WTC11 (cell line): ENCODE measurements at regions of chr10 and their contacts with region 1.

Region 1: GRCh38 chr10:92848441-92849233 is at the start of gene EXOC6:
- DNase-seq: peak; percentile 78
- ATAC-seq: peak; percentile 79
- H3K4me3 Mint-ChIP-seq: peak within 1 kb of the TSS; percentile 87
- H3K27ac Mint-ChIP-seq: no peak within 1 kb of the TSS
- H3K4me1 Mint-ChIP-seq: peaks cover 12% of the 10 kb centered on the region
- H3K27me3 Mint-ChIP-seq: peaks cover 58% of the 10 kb centered on the region
- CTCF ChIP-seq: no peak
- total RNA-seq, gene EXOC6: 4.4 to 5.0 TPM (median 4.5 TPM) in 3 replicates

Region 2: DNA sequence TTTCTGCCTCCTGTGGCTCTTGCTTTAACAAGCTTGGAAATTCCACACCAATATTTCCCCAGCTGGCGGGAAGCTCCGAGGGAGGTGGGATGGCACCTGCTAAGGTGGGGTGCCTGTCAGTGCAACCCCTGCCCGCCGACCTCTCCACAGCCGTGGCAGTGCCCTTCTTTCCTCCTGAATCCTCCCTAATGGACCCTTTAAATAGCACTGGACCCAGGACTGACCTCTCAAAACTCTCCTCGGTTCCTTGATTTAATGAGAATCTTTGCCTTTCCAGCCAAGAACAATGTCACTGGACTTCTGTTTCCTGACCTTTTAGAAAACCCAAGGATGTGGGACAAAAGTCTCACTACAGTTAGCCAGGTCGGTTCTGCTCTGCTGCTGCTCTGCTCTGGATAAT is 63.5 kb before region 1 on chr10:
- CTCF ChIA-PET with region 1: no interaction called
- POLR2A ChIA-PET with region 1: no interaction called
- DNase-seq: no peak
- ATAC-seq: no peak
- H3K4me3 Mint-ChIP-seq: no peak overlapping the region
- H3K27ac Mint-ChIP-seq: no peak overlapping the region
- H3K4me1 Mint-ChIP-seq: peaks cover 23% of the 10 kb centered on the region
- H3K27me3 Mint-ChIP-seq: peaks cover 3% of the 10 kb centered on the region; the same call in 1 of the 2 replicates
- CTCF ChIP-seq: no peak

Region 3: DNA sequence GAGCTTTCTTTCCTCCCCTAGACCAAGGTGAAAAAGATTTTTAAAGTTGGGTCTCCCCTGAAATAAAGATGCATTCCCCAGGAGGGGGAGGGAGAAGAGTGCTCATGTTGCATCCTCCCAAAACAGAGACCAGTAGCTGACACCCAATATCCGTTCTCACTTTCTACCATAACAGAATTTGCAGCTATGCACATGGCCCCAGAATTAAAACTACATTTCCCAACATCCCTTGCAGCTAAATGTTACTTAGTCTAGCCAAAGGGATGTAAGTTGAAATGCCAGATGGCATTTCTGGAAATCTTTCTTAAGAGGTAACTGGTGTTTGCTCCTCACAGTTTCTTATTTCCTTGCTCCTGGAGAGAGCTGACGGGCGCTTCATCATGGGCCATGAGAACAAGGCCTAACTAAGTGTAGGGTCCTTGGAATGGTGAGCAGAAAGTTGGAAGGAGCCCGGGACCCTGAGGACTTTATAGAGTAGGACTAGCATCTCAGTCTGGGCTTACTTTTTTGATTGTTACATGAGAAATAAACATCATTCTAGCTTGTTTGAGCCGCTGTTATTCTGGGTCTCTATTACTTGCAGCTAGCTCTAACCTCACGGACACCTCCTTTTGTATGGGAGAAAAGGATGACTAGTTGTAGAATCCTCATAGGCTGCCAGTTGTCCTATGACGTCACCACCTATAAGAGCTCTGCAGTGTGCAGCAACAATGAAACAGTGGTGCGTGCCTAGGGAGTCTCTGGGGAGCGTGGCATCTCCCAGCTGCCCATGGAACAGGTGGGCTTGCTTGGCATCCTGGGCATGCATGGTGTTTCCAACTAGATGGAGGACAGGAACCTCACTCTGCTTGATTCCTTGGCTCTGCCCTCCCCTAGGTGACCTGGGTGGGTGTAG is 46.4 kb before region 1 on chr10:
- CTCF ChIA-PET with region 1: interaction called, 12 read pairs
- POLR2A ChIA-PET with region 1: interaction called, 3 read pairs
- DNase-seq: no peak
- ATAC-seq: no peak
- H3K4me3 Mint-ChIP-seq: no peak overlapping the region
- H3K27ac Mint-ChIP-seq: no peak overlapping the region
- H3K4me1 Mint-ChIP-seq: peaks cover 16% of the 10 kb centered on the region
- H3K27me3 Mint-ChIP-seq: no peaks in the 10 kb centered on the region
- CTCF ChIP-seq: no peak

Region 4: DNA sequence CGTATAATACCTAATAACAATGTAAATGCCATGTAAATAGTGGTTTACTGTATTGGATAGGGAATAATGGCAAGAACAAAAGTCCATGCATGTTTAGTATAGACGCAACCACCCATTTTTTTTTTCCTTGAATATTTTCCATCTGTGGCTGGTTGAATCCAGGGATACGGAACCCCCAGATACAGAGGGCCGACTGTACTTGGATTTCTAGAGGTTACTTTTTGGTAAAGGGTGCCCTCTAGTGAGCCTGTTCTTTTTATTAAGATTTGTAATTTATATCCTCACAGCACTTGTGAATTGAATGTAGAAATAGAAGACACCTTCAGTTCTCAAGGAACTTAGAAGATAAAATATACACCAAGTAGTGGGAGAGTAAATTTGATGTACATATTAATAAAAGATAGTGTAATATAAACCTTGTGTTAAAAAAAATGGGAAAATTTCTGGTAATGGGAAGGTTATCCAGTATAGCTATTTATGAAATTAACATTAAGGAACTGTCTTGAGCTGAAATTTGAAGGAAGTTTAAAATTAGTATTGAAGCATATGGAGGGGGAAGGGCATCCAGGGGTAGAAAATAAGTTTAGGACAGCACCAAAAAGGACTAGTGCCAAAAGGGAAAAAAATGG is 31.7 kb after region 1 on chr10:
- CTCF ChIA-PET with region 1: interaction called, 23 read pairs
- POLR2A ChIA-PET with region 1: no interaction called
- DNase-seq: no peak
- ATAC-seq: peak; percentile 76; the same call in 1 of the 2 replicates
- H3K4me3 Mint-ChIP-seq: no peak overlapping the region
- H3K27ac Mint-ChIP-seq: no peak overlapping the region
- H3K4me1 Mint-ChIP-seq: no peaks in the 10 kb centered on the region
- H3K27me3 Mint-ChIP-seq: no peaks in the 10 kb centered on the region
- CTCF ChIP-seq: no peak; the same call in 1 of the 2 replicates